ENCODE measurements at regions of chr1 and their contacts with region 1.

Region 1: GRCh38 chr1:160376525-160377131 is 9.8 kb downstream of the NHLH1 start:
- DNase-seq: peak; percentile 76
- ATAC-seq: peak; percentile 67
- H3K4me3 ChIP-seq: peak overlapping the region in 1 of 5 experiments; percentile 21
- H3K4me3 Mint-ChIP-seq: peak overlapping the region; percentile 70
- H3K27ac ChIP-seq: no peak overlapping the region
- H3K27ac Mint-ChIP-seq: peak overlapping the region; percentile 60
- H3K4me1 ChIP-seq: peaks cover 19 to 23% of the 10 kb centered on the region in 2 donors
- H3K4me1 Mint-ChIP-seq: peaks cover 24% of the 10 kb centered on the region
- H3K27me3 ChIP-seq: no peaks in the 10 kb centered on the region
- H3K27me3 Mint-ChIP-seq: no peaks in the 10 kb centered on the region
- CTCF ChIP-seq: peak; percentile 83

Region 2: DNA sequence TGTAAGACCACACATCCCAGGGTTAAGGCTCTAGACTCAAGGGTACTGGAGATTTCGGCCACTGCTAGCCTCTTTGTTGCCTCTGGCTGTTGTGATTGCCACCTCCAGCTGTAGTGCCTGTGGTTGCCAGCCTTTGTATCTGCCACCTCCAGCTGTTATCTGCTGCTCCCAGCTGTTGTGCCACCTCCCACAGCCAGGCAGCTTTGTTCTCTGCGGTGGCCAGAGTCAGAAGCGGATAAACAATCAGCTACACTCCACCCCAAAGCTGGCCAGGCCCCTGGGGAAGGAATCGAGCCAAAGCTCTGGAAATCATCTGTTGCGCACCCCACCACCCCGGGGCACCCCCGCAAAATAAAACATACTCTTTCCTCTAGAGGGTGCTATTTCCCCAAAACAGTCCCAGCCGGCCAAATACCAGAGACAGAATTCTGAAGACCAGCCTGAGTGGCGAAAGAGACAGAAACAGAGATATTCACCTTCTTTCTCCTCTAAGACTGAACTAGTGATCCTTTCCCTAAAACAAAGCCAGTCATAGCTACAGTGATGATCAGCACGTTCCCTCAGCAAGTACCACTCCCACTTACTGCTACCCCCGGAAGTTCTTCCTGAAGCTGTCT is 330.0 kb before region 1 on chr1:
- CTCF ChIA-PET with region 1: interaction called, 11 read pairs
- POLR2A ChIA-PET with region 1: no interaction called
- intact Hi-C with region 1: no loop called
- DNase-seq: peak; percentile 73
- ATAC-seq: peak; percentile 86
- H3K4me3 ChIP-seq: peak overlapping the region in 4 of 5 experiments; percentile 26 to 57 (median 53)
- H3K4me3 Mint-ChIP-seq: peak overlapping the region; percentile 91
- H3K27ac ChIP-seq: no peak overlapping the region
- H3K27ac Mint-ChIP-seq: peak overlapping the region; percentile 17
- H3K4me1 ChIP-seq: peaks cover 11 to 12% of the 10 kb centered on the region in 2 donors
- H3K4me1 Mint-ChIP-seq: peaks cover 12% of the 10 kb centered on the region
- H3K27me3 ChIP-seq: peaks cover 0 to 10% (median 7%) of the 10 kb centered on the region in 4 experiments
- H3K27me3 Mint-ChIP-seq: peaks cover 25% of the 10 kb centered on the region
- CTCF ChIP-seq: peak; percentile 82

Region 3: GRCh38 chr1:160193091-160193819 is 183.4 kb before region 1 on chr1:
- CTCF ChIA-PET with region 1: interaction called, 35 read pairs
- POLR2A ChIA-PET with region 1: no interaction called
- intact Hi-C with region 1: loop called (anchors 1 kb)
- DNase-seq: peak; percentile 84
- ATAC-seq: peak; percentile 94
- H3K4me3 ChIP-seq: no peak overlapping the region
- H3K4me3 Mint-ChIP-seq: no peak overlapping the region
- H3K27ac ChIP-seq: no peak overlapping the region
- H3K27ac Mint-ChIP-seq: no peak overlapping the region
- H3K4me1 ChIP-seq: peaks cover 9 to 22% of the 10 kb centered on the region in 2 donors
- H3K4me1 Mint-ChIP-seq: peaks cover 3% of the 10 kb centered on the region
- H3K27me3 ChIP-seq: no peaks in the 10 kb centered on the region
- H3K27me3 Mint-ChIP-seq: peaks cover 3% of the 10 kb centered on the region
- CTCF ChIP-seq: peak; percentile 90

Region 4: GRCh38 chr1:160354388-160354985 is 22.1 kb before region 1 on chr1:
- CTCF ChIA-PET with region 1: interaction called, 79 read pairs
- POLR2A ChIA-PET with region 1: no interaction called
- intact Hi-C with region 1: loop called (anchors 2 kb)
- DNase-seq: peak; percentile 36
- ATAC-seq: peak; percentile 43
- H3K4me3 ChIP-seq: no peak overlapping the region
- H3K4me3 Mint-ChIP-seq: no peak overlapping the region
- H3K27ac ChIP-seq: no peak overlapping the region
- H3K27ac Mint-ChIP-seq: no peak overlapping the region
- H3K4me1 ChIP-seq: no peaks in the 10 kb centered on the region
- H3K4me1 Mint-ChIP-seq: no peaks in the 10 kb centered on the region
- H3K27me3 ChIP-seq: no peaks in the 10 kb centered on the region
- H3K27me3 Mint-ChIP-seq: no peaks in the 10 kb centered on the region
- CTCF ChIP-seq: peak; percentile 48

Region 5: GRCh38 chr1:160394673-160395072 is 18.0 kb after region 1 on chr1:
- CTCF ChIA-PET with region 1: interaction called, 15 read pairs
- POLR2A ChIA-PET with region 1: no interaction called
- intact Hi-C with region 1: no loop called
- DNase-seq: no peak
- ATAC-seq: no peak
- H3K4me3 ChIP-seq: no peak overlapping the region
- H3K4me3 Mint-ChIP-seq: no peak overlapping the region
- H3K27ac ChIP-seq: no peak overlapping the region
- H3K27ac Mint-ChIP-seq: no peak overlapping the region
- H3K4me1 ChIP-seq: peaks cover 0 to under 1% of the 10 kb centered on the region in 2 donors
- H3K4me1 Mint-ChIP-seq: peaks cover 6% of the 10 kb centered on the region
- H3K27me3 ChIP-seq: peaks cover 0 to under 1% (median 0%) of the 10 kb centered on the region in 4 experiments
- H3K27me3 Mint-ChIP-seq: peaks cover 8% of the 10 kb centered on the region
- CTCF ChIP-seq: no peak